ENCODE measurements at regions of chr1 and their contacts with region 1.

Region 1: GRCh38 chr1:15543589-15544568 is 17.2 kb downstream of the DNAJC16 start:
- DNase-seq: no peak
- H3K4me3 ChIP-seq: no peak overlapping the region
- H3K27ac ChIP-seq: no peak overlapping the region
- H3K4me1 ChIP-seq: no peaks in the 10 kb centered on the region
- H3K27me3 ChIP-seq: no peaks in the 10 kb centered on the region
- CTCF ChIP-seq: no peak

Region 2: GRCh38 chr1:15603050-15603965 is 59.4 kb after region 1 on chr1:
- intact Hi-C with region 1: loop called (anchors 10 kb)
- DNase-seq: peak; percentile 97
- H3K4me3 ChIP-seq: peak overlapping the region; percentile 73
- H3K27ac ChIP-seq: peak overlapping the region; percentile 87
- H3K4me1 ChIP-seq: peaks cover 35% of the 10 kb centered on the region
- H3K27me3 ChIP-seq: no peaks in the 10 kb centered on the region
- CTCF ChIP-seq: no peak

Measured in left ventricle myocardium inferior (tissue), 1 donor.